Activated B cell treated with CpG ODN at 0.5 μM for 24 hours (primary cell): ENCODE measurements at regions of chr3 and their contacts with region 1.

Region 1: DNA sequence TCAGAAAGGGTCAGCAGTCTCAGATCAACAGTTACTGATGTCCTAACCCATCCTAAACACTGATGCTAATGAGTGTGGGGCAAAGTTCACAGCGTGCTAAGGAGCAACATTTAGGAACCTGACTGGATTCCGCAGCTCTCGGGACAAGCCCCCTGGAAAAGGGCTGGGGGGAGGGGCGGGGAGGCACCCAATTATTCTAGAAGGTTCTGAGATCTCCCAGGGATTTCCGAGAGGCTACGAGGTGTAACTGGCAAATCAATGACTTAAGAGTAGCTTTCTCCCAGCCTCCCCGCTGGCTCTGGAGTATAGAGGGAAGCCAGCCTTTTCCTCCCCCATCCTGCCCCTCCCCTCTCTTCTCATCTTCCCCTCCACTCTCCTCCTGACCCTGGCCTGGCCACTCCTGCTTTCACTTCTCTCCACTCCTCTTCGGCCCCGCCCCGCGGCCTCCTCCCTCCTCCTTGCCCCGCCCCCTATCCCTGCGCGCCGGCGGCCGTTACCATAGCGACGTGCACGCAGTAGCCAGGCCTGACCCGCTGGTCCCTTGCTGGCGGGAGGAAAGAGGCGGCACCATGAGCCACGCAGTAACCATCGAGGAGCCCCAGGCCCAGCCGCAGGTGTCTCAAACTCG is at the start of gene CFAP91:
- DNase-seq: peak; percentile 86
- ATAC-seq: peak; percentile 92
- H3K4me3 Mint-ChIP-seq: peak within 1 kb of the TSS; percentile 86
- H3K27ac Mint-ChIP-seq: peak within 1 kb of the TSS; percentile 72
- H3K4me1 Mint-ChIP-seq: peaks cover 52% of the 10 kb centered on the region
- H3K27me3 Mint-ChIP-seq: no peaks in the 10 kb centered on the region
- CTCF ChIP-seq: no peak
- total RNA-seq, gene CFAP91: 8.5 and 12.9 TPM in 2 replicates

Region 2: GRCh38 chr3:119741657-119742590 is 39.3 kb after region 1 on chr3:
- CTCF ChIA-PET with region 1: no interaction called
- POLR2A ChIA-PET with region 1: no interaction called
- intact Hi-C with region 1: no loop called
- DNase-seq: no peak
- ATAC-seq: no peak
- H3K4me3 Mint-ChIP-seq: no peak overlapping the region
- H3K27ac Mint-ChIP-seq: no peak overlapping the region
- H3K4me1 Mint-ChIP-seq: peaks cover 2% of the 10 kb centered on the region
- H3K27me3 Mint-ChIP-seq: peaks cover 5% of the 10 kb centered on the region
- CTCF ChIP-seq: no peak

Region 3: GRCh38 chr3:119810018-119810435 is 107.4 kb after region 1 on chr3:
- CTCF ChIA-PET with region 1: no interaction called
- POLR2A ChIA-PET with region 1: interaction called, 3 read pairs
- intact Hi-C with region 1: loop called (anchors 2 kb)
- DNase-seq: peak; percentile 51
- ATAC-seq: peak; percentile 85
- H3K4me3 Mint-ChIP-seq: peak overlapping the region; percentile 90
- H3K27ac Mint-ChIP-seq: peak overlapping the region; percentile 75
- H3K4me1 Mint-ChIP-seq: peaks cover 9% of the 10 kb centered on the region
- H3K27me3 Mint-ChIP-seq: no peaks in the 10 kb centered on the region
- CTCF ChIP-seq: no peak